ENCODE measurements at regions of chr3 and their contacts with region 1.

Region 1: DNA sequence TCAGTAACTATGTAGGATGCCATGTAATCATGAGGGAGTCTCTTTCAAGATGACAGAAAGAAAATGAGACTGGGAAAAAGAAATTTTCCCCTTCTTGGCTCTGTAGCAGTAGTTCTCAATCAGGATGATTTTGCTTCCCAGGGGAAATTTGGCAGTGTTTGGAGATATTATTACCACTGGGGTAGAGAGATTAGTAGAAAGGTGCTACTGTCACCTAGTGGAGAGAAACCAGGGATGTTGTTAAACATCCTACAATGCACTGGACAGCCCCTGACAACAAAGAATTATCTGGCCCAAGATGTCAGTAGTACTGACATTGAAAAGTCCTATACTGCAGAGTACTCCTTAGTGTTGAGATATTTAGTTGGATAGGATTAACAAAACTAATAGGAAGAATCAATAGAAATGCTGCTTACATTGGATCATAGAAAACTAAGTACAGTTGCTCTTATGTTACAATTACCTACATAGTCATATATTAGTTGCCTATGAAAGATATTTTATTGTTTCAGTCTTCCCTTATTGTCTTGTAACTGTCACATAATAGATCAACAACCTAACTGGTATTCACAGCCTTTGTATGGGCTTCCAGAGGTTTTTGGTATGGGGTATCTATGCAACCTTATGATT is 433.3 kb downstream of the RAP2B start:
- DNase-seq: peak; percentile 68
- ATAC-seq: peak; percentile 39
- H3K4me3 ChIP-seq: no peak overlapping the region
- H3K27ac ChIP-seq: no peak overlapping the region
- H3K4me1 ChIP-seq: peaks cover 22% of the 10 kb centered on the region
- H3K27me3 ChIP-seq: no peaks in the 10 kb centered on the region
- CTCF ChIP-seq: peak; percentile 90

Region 2: GRCh38 chr3:153043729-153044328 is 551.5 kb before region 1 on chr3:
- CTCF ChIA-PET with region 1: interaction called, 4 read pairs
- POLR2A ChIA-PET with region 1: no interaction called
- intact Hi-C with region 1: loop called (anchors 2 kb)
- DNase-seq: peak; percentile 60
- ATAC-seq: peak; percentile 30; the same call in 1 of the 2 replicates
- H3K4me3 ChIP-seq: peak overlapping the region; percentile 48
- H3K27ac ChIP-seq: peak overlapping the region; percentile 60
- H3K4me1 ChIP-seq: peaks cover 30% of the 10 kb centered on the region
- H3K27me3 ChIP-seq: no peaks in the 10 kb centered on the region
- CTCF ChIP-seq: no peak

Region 3: DNA sequence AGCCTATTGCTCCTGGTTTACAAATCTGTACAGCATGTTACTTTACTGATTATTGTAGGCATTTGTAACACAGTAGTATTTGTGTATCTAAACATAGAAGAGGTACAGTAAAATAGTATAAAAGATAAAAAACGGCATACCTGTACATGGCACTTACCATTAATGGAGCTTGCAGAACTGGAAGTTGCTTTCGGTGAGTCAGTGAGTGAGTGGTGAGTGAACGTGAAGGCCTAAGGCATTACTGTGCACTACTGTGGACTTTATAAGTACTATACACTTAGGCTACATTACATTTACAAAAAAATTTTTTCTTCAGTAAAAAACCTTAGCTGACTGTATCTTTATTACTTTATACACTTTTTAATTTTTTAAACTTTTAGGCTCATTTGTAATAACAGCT is 342.3 kb before region 1 on chr3:
- CTCF ChIA-PET with region 1: no interaction called
- POLR2A ChIA-PET with region 1: no interaction called
- intact Hi-C with region 1: no loop called
- DNase-seq: peak; percentile 93
- ATAC-seq: peak; percentile 73
- H3K4me3 ChIP-seq: no peak overlapping the region
- H3K27ac ChIP-seq: no peak overlapping the region
- H3K4me1 ChIP-seq: peaks cover 33% of the 10 kb centered on the region
- H3K27me3 ChIP-seq: no peaks in the 10 kb centered on the region
- CTCF ChIP-seq: no peak

Region 4: GRCh38 chr3:153305189-153305588 is 290.1 kb before region 1 on chr3:
- CTCF ChIA-PET with region 1: no interaction called
- POLR2A ChIA-PET with region 1: no interaction called
- intact Hi-C with region 1: loop called (anchors 5 kb)
- DNase-seq: peak; percentile 37
- ATAC-seq: peak; percentile 93
- H3K4me3 ChIP-seq: no peak overlapping the region
- H3K27ac ChIP-seq: no peak overlapping the region
- H3K4me1 ChIP-seq: peaks cover 11% of the 10 kb centered on the region; the same call in 1 of the 2 replicates
- H3K27me3 ChIP-seq: no peaks in the 10 kb centered on the region
- CTCF ChIP-seq: no peak

Region 5: GRCh38 chr3:153513236-153513635 is 82.1 kb before region 1 on chr3:
- CTCF ChIA-PET with region 1: no interaction called
- POLR2A ChIA-PET with region 1: no interaction called
- intact Hi-C with region 1: loop called (anchors 1 kb)
- DNase-seq: peak; percentile 58
- ATAC-seq: peak; percentile 81
- H3K4me3 ChIP-seq: no peak overlapping the region
- H3K27ac ChIP-seq: no peak overlapping the region
- H3K4me1 ChIP-seq: no peaks in the 10 kb centered on the region
- H3K27me3 ChIP-seq: no peaks in the 10 kb centered on the region
- CTCF ChIP-seq: peak; percentile 66

Region 6: GRCh38 chr3:153652076-153652475 is 56.8 kb after region 1 on chr3:
- CTCF ChIA-PET with region 1: no interaction called
- POLR2A ChIA-PET with region 1: no interaction called
- intact Hi-C with region 1: no loop called
- DNase-seq: no peak
- ATAC-seq: no peak
- H3K4me3 ChIP-seq: no peak overlapping the region
- H3K27ac ChIP-seq: no peak overlapping the region
- H3K4me1 ChIP-seq: no peaks in the 10 kb centered on the region
- H3K27me3 ChIP-seq: no peaks in the 10 kb centered on the region
- CTCF ChIP-seq: no peak

Region 7: DNA sequence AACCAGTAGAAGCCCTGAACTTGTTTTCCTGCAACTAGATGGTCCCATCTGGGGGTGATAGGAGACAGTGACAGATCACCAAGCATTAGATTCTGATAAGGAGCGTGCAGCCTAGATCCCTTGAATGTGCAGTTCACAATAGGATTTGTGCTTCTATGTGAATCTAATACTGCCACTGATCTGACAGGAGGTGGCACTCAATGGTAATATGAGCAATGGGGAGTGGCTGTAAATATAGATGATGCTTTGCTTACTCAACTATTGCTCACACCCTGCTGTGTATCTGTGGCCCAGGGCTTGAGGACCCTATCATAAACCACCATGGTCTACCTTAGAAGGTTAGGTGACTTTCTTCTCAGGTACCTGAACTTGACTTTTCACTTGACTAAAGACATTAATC is 108.8 kb after region 1 on chr3:
- CTCF ChIA-PET with region 1: interaction called, 3 read pairs
- POLR2A ChIA-PET with region 1: no interaction called
- intact Hi-C with region 1: loop called (anchors 1 kb)
- DNase-seq: peak; percentile 61
- ATAC-seq: peak; percentile 80
- H3K4me3 ChIP-seq: no peak overlapping the region
- H3K27ac ChIP-seq: no peak overlapping the region
- H3K4me1 ChIP-seq: peaks cover 12% of the 10 kb centered on the region
- H3K27me3 ChIP-seq: no peaks in the 10 kb centered on the region
- CTCF ChIP-seq: peak; percentile 51

Region 8: GRCh38 chr3:153768561-153769469 is 173.5 kb after region 1 on chr3:
- CTCF ChIA-PET with region 1: no interaction called
- POLR2A ChIA-PET with region 1: no interaction called
- intact Hi-C with region 1: loop called (anchors 2 kb)
- DNase-seq: peak; percentile 78
- ATAC-seq: peak; percentile 93
- H3K4me3 ChIP-seq: no peak overlapping the region
- H3K27ac ChIP-seq: no peak overlapping the region
- H3K4me1 ChIP-seq: 0 out of 2 replicates have a peak, but pooled peaks cover 4% of the 10 kb centered on the region
- H3K27me3 ChIP-seq: no peaks in the 10 kb centered on the region
- CTCF ChIP-seq: peak; percentile 96

Region 9: GRCh38 chr3:153970741-153971347 is 375.5 kb after region 1 on chr3:
- CTCF ChIA-PET with region 1: no interaction called
- POLR2A ChIA-PET with region 1: no interaction called
- intact Hi-C with region 1: loop called (anchors 2 kb)
- DNase-seq: peak; percentile 62
- ATAC-seq: peak; percentile 72
- H3K4me3 ChIP-seq: no peak overlapping the region
- H3K27ac ChIP-seq: no peak overlapping the region
- H3K4me1 ChIP-seq: peaks cover 8% of the 10 kb centered on the region
- H3K27me3 ChIP-seq: no peaks in the 10 kb centered on the region
- CTCF ChIP-seq: peak; percentile 82

Measured in PC-3 (cell line).